ENCODE measurements at regions of chr19 and their contacts with region 1.

Region 1: GRCh38 chr19:19192078-19192882 is at the starts of genes BORCS8 and RFXANK:
- DNase-seq: peak; percentile 96 to 100
- ATAC-seq: peak; percentile 88 to 97 (median 89)
- H3K4me3 ChIP-seq: peak within 1 kb of the TSS; percentile 73
- H3K4me3 Mint-ChIP-seq: peak within 1 kb of the TSS; percentile 98
- H3K27ac ChIP-seq: peak within 1 kb of the TSS; percentile 94
- H3K27ac Mint-ChIP-seq: peak within 1 kb of the TSS; percentile 96
- H3K4me1 ChIP-seq: peaks cover 39% of the 10 kb centered on the region
- H3K4me1 Mint-ChIP-seq: peaks cover 25 to 49% of the 10 kb centered on the region in 2 donors
- H3K27me3 ChIP-seq: no peaks in the 10 kb centered on the region
- H3K27me3 Mint-ChIP-seq: no peaks in the 10 kb centered on the region
- CTCF ChIP-seq: no peak
- total RNA-seq, gene BORCS8: 28.2 to 42.4 (median 33.2) TPM
- total RNA-seq, gene RFXANK: 50.1 to 67.5 (median 66.0) TPM

Region 2: GRCh38 chr19:19203012-19203856 is 11.0 kb after region 1 on chr19 and contains the start of gene NR2C2AP:
- intact Hi-C with region 1: loop called (anchors 1 kb)
- DNase-seq: peak; percentile 86 to 97
- ATAC-seq: peak; percentile 90 to 96 (median 93)
- H3K4me3 ChIP-seq: peak within 1 kb of the TSS; percentile 71
- H3K4me3 Mint-ChIP-seq: peak within 1 kb of the TSS; percentile 90
- H3K27ac ChIP-seq: peak within 1 kb of the TSS; percentile 71
- H3K27ac Mint-ChIP-seq: peak within 1 kb of the TSS; percentile 84 to 87
- H3K4me1 ChIP-seq: peaks cover 41% of the 10 kb centered on the region
- H3K4me1 Mint-ChIP-seq: peaks cover 24 to 32% of the 10 kb centered on the region in 2 donors
- H3K27me3 ChIP-seq: no peaks in the 10 kb centered on the region
- H3K27me3 Mint-ChIP-seq: peaks cover 0 to 3% of the 10 kb centered on the region in 2 donors
- CTCF ChIP-seq: no peak
- total RNA-seq, gene NR2C2AP: 14.7 to 16.7 (median 16.4) TPM

Region 3: DNA sequence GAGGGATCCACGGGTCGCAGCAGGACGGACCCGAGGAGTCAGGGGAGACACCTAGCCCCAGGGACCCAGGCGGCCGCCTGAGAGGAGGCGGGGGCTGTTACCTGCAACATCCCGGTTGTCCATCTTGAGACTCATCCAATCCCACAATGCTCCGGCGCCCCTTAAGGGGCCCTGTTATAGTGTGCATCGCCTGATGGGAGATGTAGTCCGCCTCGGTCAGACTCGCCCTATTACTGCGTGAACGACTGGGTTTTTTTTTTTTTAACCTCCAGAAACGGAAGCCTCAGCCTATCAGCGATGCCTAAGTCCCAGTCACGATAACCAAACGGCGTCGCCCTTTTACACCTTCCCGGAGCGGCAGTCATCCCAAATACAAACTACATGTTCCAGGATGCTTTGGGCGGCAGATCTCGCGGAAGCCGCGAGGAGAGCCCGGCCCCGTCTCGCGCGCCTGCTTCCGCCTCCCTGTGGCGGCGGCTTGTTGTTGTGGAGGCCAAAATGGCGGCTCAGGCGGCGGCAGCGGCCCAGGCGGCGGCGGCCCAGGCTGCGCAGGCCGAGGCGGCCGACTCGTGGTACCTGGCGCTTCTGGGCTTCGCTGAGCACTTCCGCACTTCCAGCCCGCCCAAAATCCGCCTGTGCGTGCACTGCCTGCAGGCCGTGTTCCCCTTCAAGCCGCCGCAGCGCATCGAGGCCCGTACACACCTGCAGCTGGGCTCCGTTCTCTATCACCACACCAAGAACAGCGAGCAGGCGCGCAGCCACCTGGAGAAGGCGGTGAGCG is 128.3 kb after region 1 on chr19 and contains the starts of genes MAU2 and SUGP1:
- intact Hi-C with region 1: loop called (anchors 1 kb)
- DNase-seq: peak; percentile 85 to 94
- ATAC-seq: peak; percentile 90 to 95 (median 91)
- H3K4me3 ChIP-seq: peak within 1 kb of the TSS; percentile 90
- H3K4me3 Mint-ChIP-seq: peak within 1 kb of the TSS; percentile 95
- H3K27ac ChIP-seq: peak within 1 kb of the TSS; percentile 92
- H3K27ac Mint-ChIP-seq: peak within 1 kb of the TSS; percentile 93 to 94
- H3K4me1 ChIP-seq: peaks cover 26% of the 10 kb centered on the region
- H3K4me1 Mint-ChIP-seq: peaks cover 24 to 42% of the 10 kb centered on the region in 2 donors
- H3K27me3 ChIP-seq: no peaks in the 10 kb centered on the region
- H3K27me3 Mint-ChIP-seq: no peaks in the 10 kb centered on the region
- CTCF ChIP-seq: peak; percentile 25
- total RNA-seq, gene MAU2: 144 to 164 (median 151) TPM
- total RNA-seq, gene SUGP1: 64.7 to 86.5 (median 75.8) TPM

Region 4: DNA sequence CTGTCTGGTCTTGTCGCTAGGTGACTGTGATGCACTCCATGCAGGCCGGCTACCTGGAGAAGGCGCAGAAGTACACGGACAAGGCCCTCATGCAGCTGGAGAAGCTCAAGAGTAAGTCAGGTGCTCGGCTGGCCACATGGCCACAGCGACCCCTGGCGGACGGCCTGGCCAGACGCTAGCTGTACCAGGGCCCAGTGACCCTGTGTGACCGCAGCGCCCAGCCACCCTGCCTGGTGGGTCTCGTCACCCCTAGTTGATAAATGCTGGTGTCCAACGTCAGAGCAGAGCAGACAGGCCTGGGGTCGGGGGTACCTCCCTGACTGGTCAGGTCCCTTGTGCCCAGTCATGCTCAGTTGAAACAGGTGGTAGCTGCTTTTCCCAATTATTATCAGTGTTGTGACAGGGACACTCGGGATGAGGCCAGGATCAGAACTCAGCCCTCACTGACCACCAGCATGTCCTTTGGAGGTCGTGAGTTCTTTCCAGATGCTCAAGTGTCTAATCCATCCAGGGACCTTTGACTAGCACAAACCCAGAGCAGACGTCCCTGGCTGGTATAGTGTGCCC is 150.6 kb after region 1 on chr19:
- intact Hi-C with region 1: no loop called
- DNase-seq: peak in 1 of 2 donors; percentile 23
- ATAC-seq: no peak
- H3K4me3 ChIP-seq: no peak overlapping the region
- H3K4me3 Mint-ChIP-seq: no peak overlapping the region
- H3K27ac ChIP-seq: no peak overlapping the region
- H3K27ac Mint-ChIP-seq: no peak overlapping the region
- H3K4me1 ChIP-seq: no peaks in the 10 kb centered on the region
- H3K4me1 Mint-ChIP-seq: no peaks in the 10 kb centered on the region
- H3K27me3 ChIP-seq: no peaks in the 10 kb centered on the region
- H3K27me3 Mint-ChIP-seq: no peaks in the 10 kb centered on the region
- CTCF ChIP-seq: no peak

Region 5: GRCh38 chr19:19515764-19516519 is 323.7 kb after region 1 on chr19 and contains the start of gene NDUFA13:
- intact Hi-C with region 1: no loop called
- DNase-seq: peak; percentile 97 to 98
- ATAC-seq: peak; percentile 94 to 97 (median 96)
- H3K4me3 ChIP-seq: peak within 1 kb of the TSS; percentile 70
- H3K4me3 Mint-ChIP-seq: peak within 1 kb of the TSS; percentile 95
- H3K27ac ChIP-seq: peak within 1 kb of the TSS; percentile 71
- H3K27ac Mint-ChIP-seq: peak within 1 kb of the TSS; percentile 91 to 94
- H3K4me1 ChIP-seq: peaks cover 31% of the 10 kb centered on the region
- H3K4me1 Mint-ChIP-seq: peaks cover 11 to 24% of the 10 kb centered on the region in 2 donors
- H3K27me3 ChIP-seq: no peaks in the 10 kb centered on the region
- H3K27me3 Mint-ChIP-seq: no peaks in the 10 kb centered on the region
- CTCF ChIP-seq: no peak
- total RNA-seq, gene NDUFA13: 165 to 191 (median 188) TPM

Measured in natural killer cell (primary cell).